ENCODE measurements at regions of chr7 and their contacts with region 1.

Region 1: DNA sequence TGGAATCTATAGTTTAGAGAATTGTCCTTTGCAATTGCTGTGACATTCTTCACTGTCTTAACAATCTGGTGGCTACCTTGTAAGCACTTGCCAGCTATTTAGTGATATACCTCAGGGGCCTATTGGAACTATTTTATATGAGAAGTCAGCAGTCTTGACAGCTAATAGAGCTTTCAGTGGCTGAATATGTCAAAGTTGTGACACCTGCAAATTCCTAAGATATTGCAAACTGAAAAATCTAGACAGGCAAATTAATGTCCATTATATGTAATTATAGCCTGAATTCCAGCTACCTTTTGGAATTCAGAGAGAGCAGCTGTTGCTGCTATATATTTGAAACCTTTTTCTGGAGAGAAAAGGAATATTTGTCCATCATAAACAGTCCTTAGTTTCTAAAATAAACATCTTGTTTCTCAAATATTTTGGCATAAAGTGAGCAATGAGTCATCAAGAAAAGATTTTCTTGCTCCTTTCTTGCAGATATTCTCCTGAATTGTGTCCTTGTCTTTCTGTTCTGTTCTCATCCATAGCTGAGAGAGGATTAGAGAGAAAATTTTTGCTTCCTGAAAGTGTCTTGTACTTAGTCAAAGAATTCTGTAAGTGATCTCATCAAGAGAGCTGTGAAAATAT is 408.9 kb upstream of the SEMA3D start:
- DNase-seq: no peak
- H3K4me3 ChIP-seq: no peak overlapping the region
- H3K4me3 Mint-ChIP-seq: no peak overlapping the region
- H3K27ac Mint-ChIP-seq: no peak overlapping the region
- H3K4me1 ChIP-seq: peaks cover 36% of the 10 kb centered on the region
- H3K4me1 Mint-ChIP-seq: peaks cover 19% of the 10 kb centered on the region
- H3K27me3 ChIP-seq: no peaks in the 10 kb centered on the region
- H3K27me3 Mint-ChIP-seq: no peaks in the 10 kb centered on the region
- CTCF ChIP-seq: no peak

Region 2: GRCh38 chr7:84162584-84162983 is 1433.2 kb before region 1 on chr7:
- CTCF ChIA-PET with region 1: no interaction called
- POLR2A ChIA-PET with region 1: interaction called, 11 read pairs
- intact Hi-C with region 1: no loop called
- DNase-seq: no peak
- H3K4me3 ChIP-seq: no peak overlapping the region
- H3K4me3 Mint-ChIP-seq: no peak overlapping the region
- H3K27ac Mint-ChIP-seq: no peak overlapping the region
- H3K4me1 ChIP-seq: peaks cover 5% of the 10 kb centered on the region
- H3K4me1 Mint-ChIP-seq: peaks cover 10% of the 10 kb centered on the region
- H3K27me3 ChIP-seq: no peaks in the 10 kb centered on the region
- H3K27me3 Mint-ChIP-seq: no peaks in the 10 kb centered on the region
- CTCF ChIP-seq: no peak

Region 3: GRCh38 chr7:85583131-85583953 is 12.4 kb before region 1 on chr7:
- CTCF ChIA-PET with region 1: no interaction called
- POLR2A ChIA-PET with region 1: no interaction called
- intact Hi-C with region 1: no loop called
- DNase-seq: no peak
- H3K4me3 ChIP-seq: no peak overlapping the region
- H3K4me3 Mint-ChIP-seq: no peak overlapping the region
- H3K27ac Mint-ChIP-seq: no peak overlapping the region
- H3K4me1 ChIP-seq: peaks cover 19% of the 10 kb centered on the region
- H3K4me1 Mint-ChIP-seq: peaks cover 7% of the 10 kb centered on the region
- H3K27me3 ChIP-seq: no peaks in the 10 kb centered on the region
- H3K27me3 Mint-ChIP-seq: no peaks in the 10 kb centered on the region
- CTCF ChIP-seq: no peak

Region 4: GRCh38 chr7:85612514-85612913 is 16.8 kb after region 1 on chr7:
- CTCF ChIA-PET with region 1: no interaction called
- POLR2A ChIA-PET with region 1: no interaction called
- intact Hi-C with region 1: loop called (anchors 1 kb)
- DNase-seq: peak in 1 of 2 experiments; percentile 28
- H3K4me3 ChIP-seq: no peak overlapping the region
- H3K4me3 Mint-ChIP-seq: no peak overlapping the region
- H3K27ac Mint-ChIP-seq: no peak overlapping the region
- H3K4me1 ChIP-seq: 0 out of 2 replicates have a peak, but pooled peaks cover 8% of the 10 kb centered on the region
- H3K4me1 Mint-ChIP-seq: peaks cover 18% of the 10 kb centered on the region
- H3K27me3 ChIP-seq: no peaks in the 10 kb centered on the region; the same call in 1 of the 2 replicates
- H3K27me3 Mint-ChIP-seq: peaks cover 2% of the 10 kb centered on the region
- CTCF ChIP-seq: no peak

Region 5: DNA sequence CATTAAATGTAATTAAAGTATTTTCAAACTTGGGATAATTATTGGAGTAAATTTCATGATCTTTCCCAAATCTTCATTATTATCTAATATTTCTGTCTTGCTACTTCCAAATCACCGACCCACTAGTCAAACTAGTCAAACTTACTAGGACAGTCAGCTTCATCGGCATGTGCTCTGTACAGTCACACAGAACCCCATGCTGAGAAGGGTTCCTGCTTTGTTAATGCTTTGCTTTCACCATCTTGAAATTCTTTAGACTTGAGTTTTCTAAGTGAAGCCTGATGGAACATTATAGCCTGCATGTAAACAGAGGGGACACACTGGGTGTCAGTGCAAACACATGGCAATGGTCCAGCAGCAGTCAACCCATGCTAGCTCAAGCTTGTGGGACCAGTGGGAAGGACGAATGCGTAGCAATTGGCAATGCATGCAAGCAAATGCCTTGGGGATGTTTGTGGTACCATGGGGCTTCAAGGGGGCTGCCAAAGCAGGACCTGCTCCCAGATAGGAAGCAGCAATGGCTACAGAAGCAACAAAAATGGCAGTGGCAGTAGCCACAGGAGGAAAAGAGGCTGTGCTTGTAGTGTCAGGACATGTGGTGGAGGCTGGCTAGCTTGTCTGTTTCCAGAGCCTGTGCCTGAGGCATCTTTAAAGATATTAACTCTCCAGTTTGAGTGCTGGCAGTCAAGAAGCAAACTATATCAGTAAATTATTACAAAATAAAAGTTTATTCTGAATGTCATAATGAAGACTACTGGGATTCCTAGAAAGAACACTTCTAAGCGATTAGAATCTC is 32.2 kb after region 1 on chr7:
- CTCF ChIA-PET with region 1: no interaction called
- POLR2A ChIA-PET with region 1: no interaction called
- intact Hi-C with region 1: no loop called
- DNase-seq: no peak
- H3K4me3 ChIP-seq: no peak overlapping the region
- H3K4me3 Mint-ChIP-seq: no peak overlapping the region
- H3K27ac Mint-ChIP-seq: no peak overlapping the region
- H3K4me1 ChIP-seq: no peaks in the 10 kb centered on the region
- H3K4me1 Mint-ChIP-seq: no peaks in the 10 kb centered on the region
- H3K27me3 ChIP-seq: no peaks in the 10 kb centered on the region
- H3K27me3 Mint-ChIP-seq: no peaks in the 10 kb centered on the region
- CTCF ChIP-seq: no peak

Region 6: GRCh38 chr7:85638394-85638793 is 42.6 kb after region 1 on chr7:
- CTCF ChIA-PET with region 1: no interaction called
- POLR2A ChIA-PET with region 1: no interaction called
- intact Hi-C with region 1: no loop called
- DNase-seq: no peak
- H3K4me3 ChIP-seq: no peak overlapping the region
- H3K4me3 Mint-ChIP-seq: no peak overlapping the region
- H3K27ac Mint-ChIP-seq: no peak overlapping the region
- H3K4me1 ChIP-seq: peaks cover 7% of the 10 kb centered on the region; the same call in 1 of the 2 replicates
- H3K4me1 Mint-ChIP-seq: peaks cover 10% of the 10 kb centered on the region
- H3K27me3 ChIP-seq: no peaks in the 10 kb centered on the region
- H3K27me3 Mint-ChIP-seq: no peaks in the 10 kb centered on the region
- CTCF ChIP-seq: no peak